ENCODE measurements at regions of chr1 and their contacts with region 1.

Region 1: GRCh38 chr1:39105841-39106727 is 79.9 kb downstream of the NDUFS5 start:
- DNase-seq: peak; percentile 53
- H3K4me3 ChIP-seq: peak overlapping the region; percentile 50 to 76 (median 63)
- H3K27ac ChIP-seq: peak overlapping the region; percentile 76
- H3K4me1 ChIP-seq: peaks cover 56% of the 10 kb centered on the region
- H3K27me3 ChIP-seq: no peaks in the 10 kb centered on the region
- CTCF ChIP-seq: no peak

Region 2: DNA sequence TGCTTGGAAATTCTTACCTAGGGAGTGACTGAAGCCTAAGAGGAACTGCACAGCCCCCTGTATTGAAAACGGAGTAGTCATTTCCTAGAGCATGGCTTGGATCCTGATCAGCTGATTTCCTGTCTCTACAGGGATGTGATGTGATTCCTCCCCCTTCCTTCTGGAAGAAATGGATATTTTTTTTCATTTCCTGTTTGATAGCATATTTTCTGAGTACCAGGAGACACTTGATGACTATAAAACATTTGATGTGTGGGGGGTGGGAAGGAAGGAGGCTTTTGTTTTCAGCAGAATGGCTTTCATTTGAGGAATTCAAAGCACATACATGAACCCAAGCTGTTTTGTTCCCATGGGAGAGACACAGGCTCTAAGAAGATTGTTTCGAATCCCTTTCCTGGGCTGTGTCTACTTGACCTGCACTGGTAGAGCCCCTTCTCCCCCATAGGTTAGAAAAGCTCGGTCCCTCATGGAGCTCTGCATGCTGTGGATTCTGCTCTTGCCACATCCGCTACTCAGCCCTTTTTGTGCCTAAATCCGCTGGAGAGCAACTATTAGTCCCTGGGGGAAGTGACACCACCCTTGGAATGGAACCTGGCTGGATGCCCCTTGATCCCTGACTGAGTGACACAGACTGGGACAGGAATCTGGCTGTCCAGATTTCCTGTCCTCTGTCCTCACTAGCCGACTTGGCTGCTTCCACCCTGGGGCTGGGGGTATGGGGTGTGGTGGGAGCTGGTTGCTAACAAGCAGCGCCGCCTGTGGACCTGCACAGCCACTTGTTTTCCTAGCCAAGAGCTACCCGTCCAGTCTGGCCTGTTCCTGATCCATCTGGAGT is 26.6 kb after region 1 on chr1:
- CTCF ChIA-PET with region 1: no interaction called
- dilution Hi-C with region 1: no loop called
- in situ Hi-C with region 1: no loop called
- intact Hi-C with region 1: loop called (anchors 1 kb)
- DNase-seq: peak; percentile 80
- H3K4me3 ChIP-seq: no peak overlapping the region
- H3K27ac ChIP-seq: peak overlapping the region; percentile 98
- H3K4me1 ChIP-seq: peaks cover 74% of the 10 kb centered on the region
- H3K27me3 ChIP-seq: no peaks in the 10 kb centered on the region
- CTCF ChIP-seq: peak; percentile 36 to 62

Region 3: DNA sequence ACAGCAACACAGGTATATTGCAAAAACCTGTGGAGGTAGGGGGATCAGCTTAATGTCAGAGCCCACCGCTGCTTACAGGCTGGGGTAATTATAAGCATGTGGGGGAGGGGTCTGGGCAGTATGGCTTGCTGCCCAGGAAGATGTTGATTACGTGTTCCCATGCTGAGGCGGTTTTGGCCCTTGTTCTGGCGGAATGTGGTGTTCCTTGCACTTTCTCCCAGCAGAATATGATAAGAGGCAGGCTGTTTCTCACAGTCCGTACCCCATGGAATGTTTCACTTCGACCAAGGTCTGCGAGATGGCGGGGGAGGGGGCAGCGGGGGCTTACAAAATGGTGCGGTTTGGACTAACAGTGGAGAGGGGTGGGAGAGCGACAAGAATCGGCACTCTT is 595.0 kb after region 1 on chr1:
- CTCF ChIA-PET with region 1: interaction called, 15 read pairs
- dilution Hi-C with region 1: no loop called
- in situ Hi-C with region 1: no loop called
- intact Hi-C with region 1: no loop called
- DNase-seq: no peak
- H3K4me3 ChIP-seq: no peak overlapping the region
- H3K27ac ChIP-seq: no peak overlapping the region
- H3K4me1 ChIP-seq: peaks cover 4% of the 10 kb centered on the region
- H3K27me3 ChIP-seq: no peaks in the 10 kb centered on the region
- CTCF ChIP-seq: no peak

Region 4: DNA sequence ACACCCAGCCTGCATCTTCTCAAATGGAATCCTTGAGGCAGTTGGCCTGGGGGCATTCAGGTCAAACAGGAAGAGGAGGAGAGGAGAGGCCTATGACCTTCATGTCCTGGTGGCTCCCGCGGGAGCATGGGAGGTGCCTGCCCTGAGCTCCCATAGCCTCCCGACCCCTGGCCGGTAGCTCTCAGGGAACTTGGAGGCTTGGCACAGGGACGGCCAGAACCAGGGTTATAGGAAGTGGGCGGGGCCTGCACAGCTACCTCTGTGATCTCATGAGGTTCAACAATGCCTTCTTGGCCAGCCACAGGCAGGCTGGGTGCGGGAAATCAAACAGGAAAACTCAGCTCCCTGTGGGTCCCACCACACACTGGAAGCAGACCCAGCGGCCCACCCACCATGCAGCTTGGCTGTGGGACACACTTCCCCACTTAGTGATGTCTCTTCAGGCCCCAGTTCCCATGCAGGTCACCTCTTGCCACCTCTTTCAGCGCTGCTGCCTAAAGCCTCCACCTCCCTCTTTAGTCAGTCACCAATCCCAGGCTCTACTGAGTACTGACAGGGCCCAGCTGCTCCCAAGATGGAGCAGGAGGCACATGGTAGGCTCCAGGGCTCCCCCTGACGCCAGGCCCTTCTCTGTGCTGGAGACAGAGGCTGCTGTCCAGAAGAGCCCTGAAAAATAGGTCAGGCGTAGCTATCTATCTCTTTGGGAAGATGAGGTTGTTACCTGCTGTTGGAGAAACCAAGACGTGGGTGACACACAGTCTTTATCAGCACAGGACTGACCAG is 1915.6 kb after region 1 on chr1 and contains the start of gene SLFNL1:
- CTCF ChIA-PET with region 1: no interaction called
- dilution Hi-C with region 1: no loop called
- in situ Hi-C with region 1: no loop called
- intact Hi-C with region 1: no loop called
- DNase-seq: no peak
- H3K4me3 ChIP-seq: no peak within 1 kb of the TSS
- H3K27ac ChIP-seq: no peak within 1 kb of the TSS
- H3K4me1 ChIP-seq: no peaks in the 10 kb centered on the region
- H3K27me3 ChIP-seq: no peaks in the 10 kb centered on the region
- CTCF ChIP-seq: no peak
- total RNA-seq, gene SLFNL1: 0.12 to 0.17 TPM

Measured in mammary epithelial cell (primary cell).